T-cell (primary cell): ENCODE measurements at regions of chr13 and their contacts with region 1.

Region 1: GRCh38 chr13:44719857-44720671 is 143.9 kb upstream of the TSC22D1 start:
- DNase-seq: no peak
- ATAC-seq: no peak
- H3K4me3 ChIP-seq: no peak overlapping the region
- H3K4me3 Mint-ChIP-seq: no peak overlapping the region
- H3K27ac ChIP-seq: no peak overlapping the region
- H3K27ac Mint-ChIP-seq: no peak overlapping the region
- H3K4me1 ChIP-seq: no peaks in the 10 kb centered on the region
- H3K4me1 Mint-ChIP-seq: no peaks in the 10 kb centered on the region
- H3K27me3 ChIP-seq: no peaks in the 10 kb centered on the region
- H3K27me3 Mint-ChIP-seq: no peaks in the 10 kb centered on the region

Region 2: DNA sequence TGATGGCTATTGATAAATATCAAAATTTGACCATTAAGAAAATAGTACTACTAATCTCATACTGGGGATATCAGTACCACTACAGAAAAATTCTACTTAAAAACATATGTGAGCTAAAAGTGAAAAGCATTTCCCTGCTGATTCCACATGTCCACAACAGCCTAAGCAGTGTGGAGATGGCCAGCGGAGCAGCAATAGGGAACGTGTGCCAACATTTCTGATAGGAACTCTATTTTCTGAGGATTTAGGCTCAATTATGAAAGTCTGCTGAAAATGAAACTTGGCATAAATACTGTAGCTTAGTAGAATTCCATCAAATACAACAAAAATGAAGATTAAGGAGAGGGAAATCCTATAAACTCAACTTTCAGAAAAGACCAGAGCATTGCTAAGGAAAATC is 1244.9 kb before region 1 on chr13:
- CTCF ChIA-PET with region 1: interaction called in 1 of 2 experiments, 17 read pairs
- POLR2A ChIA-PET with region 1: no interaction called
- DNase-seq: no peak
- ATAC-seq: no peak
- H3K4me3 ChIP-seq: no peak overlapping the region
- H3K4me3 Mint-ChIP-seq: no peak overlapping the region
- H3K27ac ChIP-seq: no peak overlapping the region
- H3K27ac Mint-ChIP-seq: no peak overlapping the region
- H3K4me1 ChIP-seq: no peaks in the 10 kb centered on the region
- H3K4me1 Mint-ChIP-seq: no peaks in the 10 kb centered on the region
- H3K27me3 ChIP-seq: no peaks in the 10 kb centered on the region
- H3K27me3 Mint-ChIP-seq: peaks cover 7 to 10% of the 10 kb centered on the region in 2 donors

Region 3: DNA sequence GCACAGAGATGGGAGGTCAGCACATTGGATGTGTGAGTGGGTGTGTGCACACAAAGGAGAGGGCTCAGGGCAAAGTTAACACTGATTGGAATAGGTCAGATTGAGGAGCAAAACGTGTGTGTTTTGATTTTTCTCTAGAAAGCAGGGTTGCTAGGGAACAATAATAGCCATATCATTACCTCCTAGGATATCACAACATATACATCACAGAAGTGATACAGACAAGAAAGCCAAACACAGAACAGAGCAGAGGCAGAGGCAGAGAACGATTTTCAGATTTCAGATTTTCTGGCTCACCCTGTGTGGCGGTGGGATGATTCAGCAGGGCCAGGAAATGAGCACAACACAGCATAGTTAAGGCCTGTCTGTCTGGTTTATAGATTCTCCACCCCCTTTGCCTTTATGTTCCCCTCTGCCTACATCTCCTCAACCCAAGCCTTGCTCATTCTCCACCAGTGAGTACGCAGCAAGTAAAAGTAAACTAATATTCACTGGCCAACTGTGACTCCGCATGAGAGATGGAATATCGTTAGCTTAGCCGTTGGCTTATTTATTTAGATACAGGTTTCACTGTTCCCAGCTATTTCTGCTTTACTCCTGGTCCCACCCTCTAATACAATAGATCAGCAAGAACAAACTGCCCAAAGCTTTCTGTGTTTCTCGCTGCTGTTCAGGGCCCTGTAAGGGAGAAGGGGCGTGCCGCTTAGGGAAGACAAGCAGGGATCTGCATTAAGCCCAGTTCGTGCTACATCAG is 38.7 kb after region 1 on chr13:
- CTCF ChIA-PET with region 1: no interaction called
- POLR2A ChIA-PET with region 1: no interaction called
- DNase-seq: no peak
- ATAC-seq: peak in 1 of 4 experiments; percentile 26
- H3K4me3 ChIP-seq: no peak overlapping the region
- H3K4me3 Mint-ChIP-seq: no peak overlapping the region
- H3K27ac ChIP-seq: no peak overlapping the region
- H3K27ac Mint-ChIP-seq: no peak overlapping the region
- H3K4me1 ChIP-seq: no peaks in the 10 kb centered on the region
- H3K4me1 Mint-ChIP-seq: no peaks in the 10 kb centered on the region
- H3K27me3 ChIP-seq: peaks cover 0 to 3% of the 10 kb centered on the region in 2 experiments
- H3K27me3 Mint-ChIP-seq: peaks cover 0 to 4% of the 10 kb centered on the region in 2 donors